Panc1 (cell line): ENCODE measurements at regions of chr2 and their contacts with region 1.

Region 1: DNA sequence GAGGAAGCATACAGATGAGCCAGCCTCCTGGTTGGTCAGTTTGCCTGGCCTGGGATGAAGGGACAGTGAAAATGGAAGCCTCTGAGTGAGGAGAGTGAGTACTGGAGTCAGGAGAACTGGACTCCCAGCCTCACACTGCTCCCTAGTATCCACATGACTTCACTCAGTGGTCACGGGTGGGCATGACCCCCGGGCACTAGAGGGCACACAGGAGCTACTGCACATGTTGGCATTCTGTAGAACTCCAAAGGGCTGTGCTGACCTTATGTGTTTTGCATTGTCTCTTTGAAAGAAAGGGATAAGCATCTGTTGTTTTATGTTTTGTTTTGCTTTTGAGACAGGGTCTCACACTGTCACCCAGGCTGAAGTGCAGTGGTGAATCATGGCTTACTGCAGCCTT is 23.7 kb downstream of the NCAPH start:
- DNase-seq: no peak
- ATAC-seq: peak; percentile 60; the same call in 1 of the 2 replicates
- H3K4me3 ChIP-seq: no peak overlapping the region
- H3K27ac ChIP-seq: no peak overlapping the region
- H3K4me1 ChIP-seq: no peaks in the 10 kb centered on the region
- H3K27me3 ChIP-seq: no peaks in the 10 kb centered on the region
- CTCF ChIP-seq: peak; percentile 70

Region 2: GRCh38 chr2:96250188-96250587 is 109.1 kb before region 1 on chr2:
- CTCF ChIA-PET with region 1: no interaction called
- POLR2A ChIA-PET with region 1: interaction called, 14 read pairs
- in situ Hi-C with region 1: no loop called
- intact Hi-C with region 1: no loop called
- DNase-seq: no peak
- ATAC-seq: no peak
- H3K4me3 ChIP-seq: no peak overlapping the region
- H3K27ac ChIP-seq: no peak overlapping the region
- H3K4me1 ChIP-seq: no peaks in the 10 kb centered on the region
- H3K27me3 ChIP-seq: no peaks in the 10 kb centered on the region
- CTCF ChIP-seq: no peak

Region 3: DNA sequence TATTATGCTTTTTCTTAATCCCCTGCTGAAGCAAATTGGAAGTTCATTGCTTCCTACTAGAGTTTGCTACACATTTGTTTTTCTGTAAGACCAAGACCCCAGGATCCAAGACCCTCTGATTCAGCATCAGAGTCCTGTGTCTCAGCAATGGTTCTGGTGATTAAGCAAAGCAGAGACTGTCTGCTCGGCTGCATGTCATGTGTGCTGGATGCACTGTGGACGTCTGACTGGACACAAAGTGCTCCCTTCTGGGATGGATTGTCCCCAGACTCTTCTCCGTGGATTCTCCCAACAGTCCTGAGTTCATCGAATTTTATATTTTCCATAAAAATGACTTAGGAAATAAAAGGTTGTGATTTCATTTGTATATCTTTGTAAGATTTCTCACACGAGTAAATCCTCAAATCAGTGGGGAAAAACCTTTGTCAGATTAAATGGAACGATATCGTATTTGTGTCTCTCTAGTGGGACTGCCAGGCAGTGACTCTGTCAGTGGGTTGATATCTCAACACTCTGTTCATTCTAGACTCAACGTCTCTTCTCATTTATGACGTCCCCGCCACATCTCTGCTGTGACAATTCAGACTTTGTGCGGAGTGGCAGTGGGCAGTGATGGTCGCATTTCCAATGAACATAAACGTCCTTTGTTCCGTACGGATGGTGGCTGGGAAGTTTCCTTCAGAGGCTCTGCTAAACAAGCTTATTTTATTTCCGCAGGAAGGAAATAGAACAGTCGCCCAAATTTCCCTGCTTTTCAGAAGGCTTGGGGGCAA is 34.9 kb after region 1 on chr2:
- CTCF ChIA-PET with region 1: interaction called, 11 read pairs
- POLR2A ChIA-PET with region 1: no interaction called
- in situ Hi-C with region 1: no loop called
- intact Hi-C with region 1: no loop called
- DNase-seq: no peak
- ATAC-seq: no peak
- H3K4me3 ChIP-seq: no peak overlapping the region
- H3K27ac ChIP-seq: no peak overlapping the region
- H3K4me1 ChIP-seq: peaks cover 5% of the 10 kb centered on the region; the same call in 1 of the 2 replicates
- H3K27me3 ChIP-seq: no peaks in the 10 kb centered on the region
- CTCF ChIP-seq: no peak

Region 4: GRCh38 chr2:96509114-96509846 is 150.0 kb after region 1 on chr2:
- CTCF ChIA-PET with region 1: interaction called, 12 read pairs
- POLR2A ChIA-PET with region 1: no interaction called
- in situ Hi-C with region 1: no loop called
- intact Hi-C with region 1: loop called (anchors 10 kb)
- DNase-seq: no peak
- ATAC-seq: peak; percentile 87
- H3K4me3 ChIP-seq: no peak overlapping the region
- H3K27ac ChIP-seq: peak overlapping the region; percentile 61
- H3K4me1 ChIP-seq: peaks cover 42% of the 10 kb centered on the region
- H3K27me3 ChIP-seq: no peaks in the 10 kb centered on the region
- CTCF ChIP-seq: peak; percentile 98

Region 5: DNA sequence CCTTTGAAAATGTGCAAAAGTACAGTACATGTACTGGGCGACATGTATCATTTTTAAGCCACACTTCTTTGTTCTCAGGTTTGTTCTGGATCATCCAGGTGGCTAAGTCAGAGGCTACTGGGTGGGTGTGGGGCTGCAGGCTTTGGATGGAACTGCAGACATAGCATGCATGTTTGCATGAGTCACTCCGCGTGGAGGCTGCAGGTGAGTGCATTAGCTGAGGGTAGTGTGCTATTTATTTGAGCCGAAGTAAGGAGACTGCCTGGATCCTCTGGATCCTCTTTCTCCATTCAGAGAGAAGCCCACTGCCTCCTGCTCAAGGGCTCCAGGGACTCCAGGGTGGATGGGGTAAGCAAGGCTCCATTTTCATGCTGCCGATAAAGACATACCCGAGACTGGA is 155.2 kb after region 1 on chr2:
- CTCF ChIA-PET with region 1: interaction called, 12 read pairs
- POLR2A ChIA-PET with region 1: no interaction called
- in situ Hi-C with region 1: no loop called
- intact Hi-C with region 1: loop called (anchors 10 kb)
- DNase-seq: no peak
- ATAC-seq: no peak
- H3K4me3 ChIP-seq: no peak overlapping the region
- H3K27ac ChIP-seq: no peak overlapping the region
- H3K4me1 ChIP-seq: peaks cover 3% of the 10 kb centered on the region; the same call in 1 of the 2 replicates
- H3K27me3 ChIP-seq: no peaks in the 10 kb centered on the region
- CTCF ChIP-seq: no peak